Naive thymus-derived CD8-positive, alpha-beta T cell (primary cell): ENCODE measurements at regions of chr17 and their contacts with region 1.

Region 1: GRCh38 chr17:499951-500461 is 147.4 kb upstream of the RPH3AL start:
- DNase-seq: peak in 7 of 10 donors; percentile 18 to 70 (median 53)
- ATAC-seq: peak; percentile 76 to 83
- H3K4me3 Mint-ChIP-seq: peak overlapping the region; percentile 61 to 86 (median 76)
- H3K27ac Mint-ChIP-seq: peak overlapping the region; percentile 57 to 93 (median 86)
- H3K4me1 Mint-ChIP-seq: peaks cover 22 to 69% (median 46%) of the 10 kb centered on the region in 4 donors
- H3K27me3 Mint-ChIP-seq: peaks cover 0 to 5% (median 0%) of the 10 kb centered on the region in 5 donors

Region 2: DNA sequence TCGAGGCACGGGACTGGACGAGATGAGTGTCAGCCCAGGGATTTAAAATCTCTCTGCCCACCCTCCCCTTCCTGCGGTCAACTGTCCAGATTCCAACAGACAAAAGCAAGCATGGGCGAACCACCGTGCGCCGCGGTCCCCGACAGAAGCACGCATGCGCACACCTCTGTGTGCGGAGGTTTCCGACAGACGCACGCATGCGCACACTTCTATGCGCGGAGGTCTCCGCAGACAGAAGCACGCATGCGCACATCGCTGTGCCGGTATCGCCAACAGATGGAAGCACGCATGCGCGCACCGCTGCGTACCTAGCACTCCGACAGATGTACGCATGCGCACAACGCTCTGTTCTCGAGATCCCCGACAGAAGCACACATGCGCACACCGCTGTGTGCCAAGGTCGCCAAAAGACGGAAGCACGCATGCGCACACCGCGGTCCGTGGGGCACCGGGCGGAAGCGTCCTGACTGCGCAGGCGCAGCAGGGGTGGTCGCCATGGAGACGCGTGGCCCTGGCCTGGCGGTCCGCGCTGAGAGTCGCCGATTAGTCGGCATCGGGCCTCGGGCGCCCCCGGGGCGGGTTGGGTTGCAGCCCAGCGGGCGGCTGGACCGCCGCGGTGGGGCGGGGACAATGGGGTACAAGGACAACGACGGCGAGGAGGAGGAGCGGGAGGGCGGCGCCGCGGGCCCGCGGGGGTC is 90.0 kb before region 1 on chr17:
- POLR2A ChIA-PET with region 1: interaction called, 11 read pairs
- DNase-seq: peak; percentile 96 to 100 (median 99)
- ATAC-seq: peak; percentile 22 to 55
- H3K4me3 Mint-ChIP-seq: peak overlapping the region; percentile 85 to 99 (median 93)
- H3K27ac Mint-ChIP-seq: peak overlapping the region; percentile 94 to 99 (median 97)
- H3K4me1 Mint-ChIP-seq: peaks cover 48 to 60% (median 55%) of the 10 kb centered on the region in 4 donors
- H3K27me3 Mint-ChIP-seq: peaks cover 0 to 7% (median 0%) of the 10 kb centered on the region in 5 donors

Region 3: GRCh38 chr17:416293-417206 is 83.5 kb before region 1 on chr17:
- POLR2A ChIA-PET with region 1: interaction called, 16 read pairs
- DNase-seq: peak in 5 of 10 donors; percentile 26 to 53 (median 49)
- ATAC-seq: peak; percentile 28 to 30
- H3K4me3 Mint-ChIP-seq: peak overlapping the region; percentile 73 to 92 (median 87)
- H3K27ac Mint-ChIP-seq: peak overlapping the region; percentile 83 to 99 (median 96)
- H3K4me1 Mint-ChIP-seq: peaks cover 49 to 88% (median 82%) of the 10 kb centered on the region in 4 donors
- H3K27me3 Mint-ChIP-seq: no peaks in the 10 kb centered on the region